ENCODE measurements at regions of chr20 and their contacts with region 1.

Region 1: DNA sequence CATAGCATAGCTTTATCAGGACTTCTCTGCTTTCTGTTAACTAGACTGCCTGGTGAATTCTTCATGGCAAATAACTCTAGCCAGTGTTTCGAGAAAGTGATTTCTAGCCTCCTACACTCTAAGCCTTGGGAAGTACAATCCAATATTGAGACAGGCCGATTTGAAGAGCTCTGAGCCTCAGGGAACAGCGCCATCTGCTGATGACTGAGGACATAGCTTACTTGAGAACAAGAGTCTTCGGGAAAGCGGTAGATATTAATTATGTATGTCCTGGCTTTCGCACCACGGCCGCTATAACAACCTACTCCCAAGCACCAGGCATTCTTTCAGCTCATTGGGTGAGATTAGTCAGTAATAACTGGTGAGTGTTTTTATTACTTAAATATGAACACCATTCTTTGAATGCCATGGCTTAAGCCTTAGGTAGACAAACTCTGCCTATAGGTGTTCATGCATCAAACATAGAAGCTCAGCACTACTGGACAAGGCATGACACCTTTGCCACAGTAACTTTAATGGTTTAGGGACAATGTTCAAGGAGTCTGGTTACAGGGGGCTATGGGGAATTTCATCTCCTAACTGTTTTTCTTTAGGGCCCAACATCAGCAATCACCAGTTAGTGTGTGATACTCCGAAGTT is 518.6 kb downstream of the BMP2 start:
- DNase-seq: peak; percentile 88
- H3K4me3 Mint-ChIP-seq: no peak overlapping the region
- H3K27ac Mint-ChIP-seq: no peak overlapping the region
- H3K4me1 Mint-ChIP-seq: no peaks in the 10 kb centered on the region
- H3K27me3 Mint-ChIP-seq: no peaks in the 10 kb centered on the region
- CTCF ChIP-seq: peak; percentile 76

Region 2: DNA sequence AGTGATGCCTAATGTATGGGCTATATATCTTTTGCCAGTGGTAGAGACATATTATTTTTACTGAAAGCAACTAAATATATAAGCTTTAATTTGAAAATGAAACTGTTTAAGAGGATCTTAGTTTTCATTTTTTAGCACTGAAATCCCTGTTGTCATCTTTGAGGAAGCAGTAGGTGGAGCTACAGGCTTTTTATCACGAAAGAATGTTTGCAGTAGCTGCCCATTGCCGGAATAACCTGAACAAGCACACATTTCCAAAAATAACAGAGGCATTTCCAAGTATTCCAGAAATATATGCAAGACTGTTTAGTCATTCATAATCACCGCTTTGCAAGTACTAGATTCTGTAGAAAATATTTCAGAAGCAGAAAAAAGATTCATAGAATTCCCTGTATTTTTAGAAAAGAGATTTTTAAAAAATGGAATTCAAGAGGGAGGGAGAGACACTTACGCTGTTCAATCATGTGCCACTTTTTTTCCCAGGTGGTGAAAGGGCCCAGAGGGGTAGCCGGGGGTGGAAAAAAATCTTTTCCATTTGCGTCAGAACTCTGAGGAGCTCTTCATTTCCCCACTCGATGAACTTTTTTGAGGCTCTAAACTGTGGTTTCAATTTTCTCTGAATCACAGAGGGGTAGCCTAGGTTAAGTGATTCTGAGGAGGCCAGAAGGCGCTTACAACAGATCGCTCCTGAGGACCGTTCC is 1020.7 kb before region 1 on chr20:
- CTCF ChIA-PET with region 1: interaction called, 5 read pairs
- POLR2A ChIA-PET with region 1: interaction called, 4 read pairs
- intact Hi-C with region 1: loop called (anchors 1 kb)
- DNase-seq: peak; percentile 76
- H3K4me3 Mint-ChIP-seq: peak overlapping the region; percentile 30
- H3K27ac Mint-ChIP-seq: peak overlapping the region; percentile 82
- H3K4me1 Mint-ChIP-seq: peaks cover 11% of the 10 kb centered on the region
- H3K27me3 Mint-ChIP-seq: no peaks in the 10 kb centered on the region
- CTCF ChIP-seq: peak; percentile 57

Region 3: DNA sequence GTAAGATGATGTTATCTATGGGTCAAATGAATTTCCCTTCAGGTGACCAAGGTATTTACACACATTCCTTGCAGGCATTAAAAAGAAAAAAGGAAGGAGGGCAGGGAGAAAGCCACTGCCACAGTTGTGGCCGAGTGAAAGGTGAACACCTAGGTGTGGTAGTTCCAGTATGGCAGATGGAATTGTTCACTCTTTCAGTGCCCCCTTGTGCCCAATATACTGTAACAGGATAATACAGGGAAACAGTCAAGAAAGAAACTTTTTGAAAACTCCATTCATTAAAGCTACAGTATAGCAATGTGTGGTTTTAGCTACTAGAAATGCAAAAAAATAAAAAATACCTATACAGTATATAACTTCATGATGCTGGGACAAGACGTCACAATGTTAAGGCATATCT is 466.4 kb before region 1 on chr20:
- CTCF ChIA-PET with region 1: interaction called, 41 read pairs
- POLR2A ChIA-PET with region 1: interaction called, 3 read pairs
- intact Hi-C with region 1: no loop called
- DNase-seq: peak; percentile 42
- H3K4me3 Mint-ChIP-seq: no peak overlapping the region
- H3K27ac Mint-ChIP-seq: no peak overlapping the region
- H3K4me1 Mint-ChIP-seq: peaks cover 4% of the 10 kb centered on the region
- H3K27me3 Mint-ChIP-seq: no peaks in the 10 kb centered on the region
- CTCF ChIP-seq: peak; percentile 34

Region 4: DNA sequence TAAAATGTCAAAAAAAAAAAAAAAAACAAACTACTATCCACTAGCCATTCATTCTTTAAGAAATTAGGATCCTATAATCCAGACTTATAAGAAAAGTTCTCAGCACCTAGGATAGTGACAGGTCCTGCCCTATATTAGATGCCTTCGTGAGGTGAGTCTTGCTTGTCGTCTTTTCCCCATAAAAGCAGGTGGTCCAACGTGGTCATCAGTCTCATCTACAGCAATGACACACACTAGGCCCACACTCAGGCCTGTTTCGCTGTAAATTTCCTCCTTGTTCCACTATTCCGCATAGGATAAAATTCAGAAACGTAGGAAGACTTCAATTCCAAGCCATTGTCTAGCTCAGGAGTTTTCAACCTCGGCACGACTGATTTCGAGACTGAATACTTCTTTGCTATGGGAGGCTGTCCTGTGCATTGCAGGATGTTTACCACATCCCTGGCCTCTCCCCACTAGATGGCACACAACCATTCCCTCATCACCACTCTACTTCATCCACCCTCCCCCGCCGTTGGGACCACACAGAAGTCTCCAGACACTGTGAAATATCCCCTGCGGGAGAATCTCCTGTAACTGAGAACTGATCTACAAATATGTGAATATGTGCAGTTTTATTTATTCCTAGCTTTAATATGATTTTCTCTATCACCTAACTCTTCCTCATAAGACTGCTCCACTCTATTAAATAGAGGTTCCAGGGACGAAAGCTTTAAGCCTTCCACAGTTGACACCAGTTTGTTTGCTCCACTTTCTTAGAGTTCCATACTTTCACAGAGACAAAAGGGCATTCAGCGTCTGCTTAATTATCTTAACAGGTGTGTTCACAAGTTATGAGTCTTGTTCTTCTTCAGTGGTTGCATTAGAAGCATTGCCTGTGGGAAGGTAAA is 172.2 kb before region 1 on chr20:
- CTCF ChIA-PET with region 1: interaction called, 47 read pairs
- POLR2A ChIA-PET with region 1: no interaction called
- intact Hi-C with region 1: loop called (anchors 5 kb)
- DNase-seq: peak; percentile 70
- H3K4me3 Mint-ChIP-seq: no peak overlapping the region
- H3K27ac Mint-ChIP-seq: no peak overlapping the region
- H3K4me1 Mint-ChIP-seq: peaks cover 8% of the 10 kb centered on the region
- H3K27me3 Mint-ChIP-seq: no peaks in the 10 kb centered on the region
- CTCF ChIP-seq: peak; percentile 67

Region 5: DNA sequence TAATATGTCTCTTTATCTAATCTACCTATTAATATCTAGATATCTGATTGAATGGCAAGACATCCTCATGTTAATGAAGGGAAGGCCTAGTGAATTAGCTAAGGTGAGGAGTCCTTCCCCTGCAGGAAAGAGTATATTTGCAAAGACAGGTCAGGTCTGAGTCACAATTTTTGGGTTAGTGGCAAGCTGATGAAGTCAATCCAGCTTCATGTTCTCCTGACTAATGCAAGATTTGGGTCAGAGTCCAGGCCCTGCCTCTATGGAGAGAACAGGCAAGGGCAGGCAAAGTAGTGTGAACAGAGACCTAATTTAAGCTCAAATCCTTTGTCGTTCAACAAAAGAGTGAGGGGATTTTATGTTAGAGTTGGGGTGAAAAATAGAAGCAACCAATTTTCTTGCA is 21.9 kb before region 1 on chr20:
- CTCF ChIA-PET with region 1: interaction called, 11 read pairs
- POLR2A ChIA-PET with region 1: interaction called, 4 read pairs
- intact Hi-C with region 1: no loop called
- DNase-seq: peak; percentile 6
- H3K4me3 Mint-ChIP-seq: no peak overlapping the region
- H3K27ac Mint-ChIP-seq: peak overlapping the region; percentile 16
- H3K4me1 Mint-ChIP-seq: peaks cover 7% of the 10 kb centered on the region
- H3K27me3 Mint-ChIP-seq: no peaks in the 10 kb centered on the region
- CTCF ChIP-seq: no peak

Region 6: DNA sequence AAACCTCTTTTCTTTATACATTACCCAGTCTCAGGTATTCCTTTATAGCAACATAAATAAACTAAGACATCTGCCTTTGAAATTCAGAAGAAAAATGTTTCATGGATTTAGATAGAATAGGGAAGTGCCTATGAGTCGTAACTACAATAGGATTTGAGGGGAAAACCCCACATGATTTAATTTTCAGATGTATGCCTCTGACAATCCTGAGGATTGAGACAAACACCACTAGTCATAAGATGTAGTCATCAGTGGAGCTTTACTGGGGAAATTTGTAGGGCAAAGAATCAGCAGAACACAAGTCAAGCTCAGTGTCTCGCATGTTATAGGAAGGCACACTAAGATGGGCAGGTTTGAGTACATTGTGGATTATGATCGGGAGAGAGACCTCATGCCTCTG is 47.8 kb after region 1 on chr20:
- CTCF ChIA-PET with region 1: interaction called, 10 read pairs
- POLR2A ChIA-PET with region 1: no interaction called
- intact Hi-C with region 1: no loop called
- DNase-seq: peak; percentile 5
- H3K4me3 Mint-ChIP-seq: no peak overlapping the region
- H3K27ac Mint-ChIP-seq: no peak overlapping the region
- H3K4me1 Mint-ChIP-seq: no peaks in the 10 kb centered on the region
- H3K27me3 Mint-ChIP-seq: no peaks in the 10 kb centered on the region
- CTCF ChIP-seq: no peak

Region 7: GRCh38 chr20:7497985-7498384 is 211.9 kb after region 1 on chr20:
- CTCF ChIA-PET with region 1: no interaction called
- POLR2A ChIA-PET with region 1: no interaction called
- intact Hi-C with region 1: no loop called
- DNase-seq: peak; percentile 86
- H3K4me3 Mint-ChIP-seq: no peak overlapping the region
- H3K27ac Mint-ChIP-seq: peak overlapping the region; percentile 44
- H3K4me1 Mint-ChIP-seq: peaks cover 21% of the 10 kb centered on the region
- H3K27me3 Mint-ChIP-seq: no peaks in the 10 kb centered on the region
- CTCF ChIP-seq: no peak

Region 8: DNA sequence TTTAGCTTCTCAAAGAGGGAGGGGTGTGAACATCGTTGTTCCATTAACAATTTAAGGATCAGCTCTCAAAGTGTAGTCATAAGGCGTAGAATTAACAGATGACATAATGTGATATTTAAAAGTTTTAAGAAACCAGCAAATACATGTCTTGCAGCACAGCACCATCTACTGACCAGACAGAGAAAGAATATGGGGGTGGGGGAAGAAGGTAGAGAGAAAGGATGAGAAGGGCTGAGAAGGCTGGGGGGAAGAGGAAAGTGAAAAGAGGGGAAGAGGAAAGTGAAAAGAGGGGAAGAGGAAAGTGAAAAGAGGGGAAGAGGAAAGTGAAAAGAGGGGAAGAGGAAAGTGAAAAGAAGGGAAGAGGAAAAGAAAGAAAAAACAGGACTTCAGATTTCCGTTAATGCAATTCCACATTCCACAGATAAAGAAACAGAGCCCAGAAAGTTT is 573.3 kb after region 1 on chr20:
- CTCF ChIA-PET with region 1: interaction called, 9 read pairs
- POLR2A ChIA-PET with region 1: no interaction called
- intact Hi-C with region 1: loop called (anchors 1 kb)
- DNase-seq: peak; percentile 79
- H3K4me3 Mint-ChIP-seq: no peak overlapping the region
- H3K27ac Mint-ChIP-seq: peak overlapping the region; percentile 23
- H3K4me1 Mint-ChIP-seq: peaks cover 33% of the 10 kb centered on the region
- H3K27me3 Mint-ChIP-seq: no peaks in the 10 kb centered on the region
- CTCF ChIP-seq: peak; percentile 50